ENCODE measurements at regions of chr1 and their contacts with region 1.

Region 1: DNA sequence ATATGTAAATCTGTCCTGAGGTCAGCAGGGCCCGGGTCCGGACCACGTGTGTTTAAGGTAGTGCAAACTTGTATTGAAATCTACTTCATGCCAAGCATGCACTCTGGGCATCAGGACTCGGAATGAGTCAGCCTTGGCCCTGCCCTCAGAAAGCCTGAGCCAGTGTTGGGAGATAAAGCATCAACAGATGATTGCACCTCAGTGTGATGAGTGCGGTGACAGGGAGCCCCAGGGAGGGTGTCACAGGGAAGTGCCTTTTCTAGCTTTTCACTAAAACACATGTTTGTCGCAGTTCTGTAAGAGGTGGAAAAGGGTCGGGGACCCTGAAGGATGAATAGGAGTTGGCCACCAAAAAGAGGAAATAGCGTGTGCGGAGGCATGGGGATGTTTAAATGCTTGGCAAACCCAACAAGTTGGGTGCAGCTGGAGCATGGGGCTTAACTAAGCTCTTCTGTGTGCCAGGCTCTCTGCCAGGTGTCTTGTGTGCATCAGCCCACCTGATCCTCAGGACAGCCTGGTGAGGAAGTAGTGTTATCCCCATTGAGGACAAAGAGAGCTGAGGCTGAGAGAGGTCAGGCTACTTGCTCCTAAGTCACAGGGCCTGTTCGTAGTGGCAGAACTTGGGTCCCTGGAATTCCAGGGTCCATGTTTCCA is 48.2 kb upstream of the EPB41 start:
- DNase-seq: no peak
- ATAC-seq: no peak
- H3K4me3 ChIP-seq: no peak overlapping the region
- H3K27ac ChIP-seq: no peak overlapping the region
- H3K4me1 ChIP-seq: no peaks in the 10 kb centered on the region
- H3K27me3 ChIP-seq: no peaks in the 10 kb centered on the region
- CTCF ChIP-seq: no peak
- POLR2A ChIP-seq: no peak

Region 2: DNA sequence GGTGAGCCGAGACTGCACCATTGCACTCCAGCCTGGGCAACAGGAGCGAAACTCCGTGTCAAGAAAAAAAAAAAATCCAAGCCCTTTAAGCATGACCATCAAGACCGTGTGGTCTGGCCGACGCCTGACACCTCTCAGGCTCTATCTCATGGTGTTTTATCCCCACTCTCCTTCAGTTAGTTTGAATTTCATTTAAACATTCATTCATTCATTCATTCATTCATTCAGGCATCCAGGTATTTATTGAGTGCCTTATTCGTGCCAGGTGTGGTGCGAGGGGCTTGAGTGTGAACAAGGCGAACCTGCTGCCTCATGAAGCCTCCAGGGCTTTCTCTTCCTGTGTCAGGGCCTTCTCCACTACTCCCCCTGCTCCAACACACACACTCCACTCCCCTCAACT is 76.7 kb before region 1 on chr1:
- in situ Hi-C with region 1: loop called in 1 of 4 experiments (anchors 5 kb)
- intact Hi-C with region 1: no loop called
- DNase-seq: no peak
- ATAC-seq: no peak
- H3K4me3 ChIP-seq: no peak overlapping the region
- H3K27ac ChIP-seq: no peak overlapping the region
- H3K4me1 ChIP-seq: peaks cover 11 to 15% of the 10 kb centered on the region in 2 donors
- H3K27me3 ChIP-seq: no peaks in the 10 kb centered on the region
- CTCF ChIP-seq: no peak
- POLR2A ChIP-seq: no peak